A549 (cell line): ENCODE measurements at regions of chr7 and their contacts with region 1.

Region 1: GRCh38 chr7:30459591-30460257 is 18.9 kb downstream of the NOD1 start:
- DNase-seq: peak; percentile 61 to 85
- ATAC-seq: peak; percentile 93 to 94
- H3K4me3 ChIP-seq: peak overlapping the region; percentile 12
- H3K27ac ChIP-seq: peak overlapping the region; percentile 77 to 90
- H3K4me1 ChIP-seq: peaks cover 44% of the 10 kb centered on the region
- CTCF ChIP-seq: no peak
- EP300 ChIP-seq: no peak; a peak in 1 of 5 replicates
- POLR2A ChIP-seq: no peak
- RAD21 ChIP-seq: peak in 1 of 2 experiments; percentile 28; a peak in 1 of 5 replicates

Region 2: GRCh38 chr7:30478349-30479201 is 18.9 kb after region 1 on chr7 and contains the start of gene NOD1:
- CTCF ChIA-PET with region 1: interaction called, 3 read pairs
- POLR2A ChIA-PET with region 1: interaction called, 12 read pairs
- DNase-seq: peak; percentile 78
- ATAC-seq: peak; percentile 98 to 99
- H3K4me3 ChIP-seq: peak within 1 kb of the TSS; percentile 67
- H3K27ac ChIP-seq: peak within 1 kb of the TSS; percentile 92 to 97
- H3K4me1 ChIP-seq: peaks cover 20% of the 10 kb centered on the region
- CTCF ChIP-seq: no peak
- EP300 ChIP-seq: no peak
- POLR2A ChIP-seq: peak; percentile 74
- RAD21 ChIP-seq: no peak; a peak in 2 of 5 replicates
- polyA plus RNA-seq, gene NOD1: 6.5 and 6.6 TPM in 2 replicates

Region 3: DNA sequence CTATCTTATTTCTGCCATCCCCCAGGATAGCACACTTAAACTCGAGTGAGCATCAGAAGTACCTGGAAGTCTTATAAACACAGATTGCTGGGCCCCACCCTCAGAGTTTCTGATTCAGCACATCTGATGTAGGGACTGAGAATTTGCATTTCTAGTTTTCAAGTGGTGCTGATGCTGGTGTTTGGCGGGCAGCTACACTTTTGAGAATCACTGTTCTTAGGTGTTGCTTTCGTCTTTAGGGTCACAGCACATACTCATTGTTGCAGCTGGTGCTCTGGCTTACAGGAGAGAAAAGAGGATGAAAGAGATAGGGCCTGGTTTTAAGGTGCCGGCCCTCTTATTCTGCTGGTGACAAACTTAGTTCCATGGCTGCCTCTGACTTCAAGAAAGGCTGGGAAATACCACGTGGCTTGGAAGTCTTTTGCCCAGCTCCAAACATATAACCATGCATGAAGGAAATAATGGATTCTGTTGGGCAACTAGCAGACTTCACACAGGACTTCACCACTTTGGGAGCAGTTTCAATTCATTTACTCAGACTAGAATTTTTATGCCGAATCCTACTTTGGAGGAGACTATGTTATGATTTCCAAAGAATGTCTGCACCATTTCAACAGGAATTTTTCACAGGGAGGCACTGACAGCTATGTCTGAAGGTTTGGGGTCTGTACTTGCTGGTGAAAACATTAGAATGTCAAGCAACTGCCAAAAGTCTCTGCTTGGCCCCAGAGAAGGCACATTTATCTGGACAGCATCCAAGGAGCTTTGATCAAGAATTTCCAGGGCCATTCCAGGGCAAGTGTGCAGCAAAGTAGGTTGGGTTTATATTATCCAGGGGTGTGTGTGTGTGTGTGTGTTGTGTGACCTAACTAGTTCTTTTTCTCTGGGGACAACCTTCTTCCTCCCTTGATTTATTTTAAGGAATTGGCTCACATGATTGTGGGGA is 304.6 kb after region 1 on chr7:
- CTCF ChIA-PET with region 1: no interaction called
- POLR2A ChIA-PET with region 1: no interaction called
- DNase-seq: no peak
- ATAC-seq: no peak
- H3K4me3 ChIP-seq: no peak overlapping the region
- H3K27ac ChIP-seq: no peak overlapping the region
- H3K4me1 ChIP-seq: no peaks in the 10 kb centered on the region
- CTCF ChIP-seq: no peak
- EP300 ChIP-seq: no peak
- POLR2A ChIP-seq: no peak
- RAD21 ChIP-seq: no peak